Ascending aorta (tissue), 2 donors: ENCODE measurements at regions of chr5 and their contacts with region 1.

Region 1: DNA sequence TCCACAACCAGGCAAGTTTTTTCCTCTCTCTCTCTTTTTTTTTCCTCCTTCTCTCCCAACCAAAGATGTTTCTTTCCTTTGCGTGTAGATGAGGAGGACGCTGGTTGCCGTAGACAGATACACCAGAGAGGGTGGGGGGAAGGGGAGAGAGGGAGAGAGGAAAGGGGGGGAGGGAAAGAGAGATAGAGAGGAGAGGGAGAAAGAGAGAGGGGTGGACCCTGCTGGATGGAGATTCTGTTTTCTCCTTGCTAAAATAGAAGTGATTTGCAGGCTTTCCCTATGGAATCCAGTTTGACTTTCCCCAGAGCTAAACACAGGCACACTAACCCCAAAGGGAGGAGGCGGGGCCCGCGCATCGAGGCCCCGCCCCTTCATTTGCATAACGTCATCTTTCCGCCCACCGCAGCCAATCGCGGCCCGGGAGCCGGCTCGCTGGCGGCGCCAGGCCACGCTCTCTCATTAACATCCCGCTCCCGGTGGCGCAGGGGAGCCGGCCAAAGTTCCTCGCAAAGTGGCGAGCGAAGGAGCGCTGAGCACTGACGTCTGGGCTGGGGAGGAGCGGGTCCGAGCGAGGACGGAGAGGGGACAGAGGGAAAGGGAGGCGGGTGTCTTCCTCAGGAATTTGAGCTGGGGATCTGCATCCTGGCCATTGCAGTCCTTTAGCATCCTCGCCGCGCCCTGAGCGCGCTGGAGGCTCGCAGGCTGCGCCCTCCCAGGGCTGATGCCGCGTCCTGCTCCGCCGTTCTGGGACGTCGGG is 487 bp upstream of the EBF1 start:
- DNase-seq: peak; percentile 67 to 96
- H3K4me3 ChIP-seq: peak overlapping the region; percentile 70 to 77
- H3K27ac ChIP-seq: peak overlapping the region; percentile 94 to 97
- H3K4me1 ChIP-seq: peaks cover 7 to 15% of the 10 kb centered on the region in 2 donors
- H3K27me3 ChIP-seq: no peaks in the 10 kb centered on the region
- CTCF ChIP-seq: peak in 2 of 3 experiments; percentile 6 to 12

Region 2: DNA sequence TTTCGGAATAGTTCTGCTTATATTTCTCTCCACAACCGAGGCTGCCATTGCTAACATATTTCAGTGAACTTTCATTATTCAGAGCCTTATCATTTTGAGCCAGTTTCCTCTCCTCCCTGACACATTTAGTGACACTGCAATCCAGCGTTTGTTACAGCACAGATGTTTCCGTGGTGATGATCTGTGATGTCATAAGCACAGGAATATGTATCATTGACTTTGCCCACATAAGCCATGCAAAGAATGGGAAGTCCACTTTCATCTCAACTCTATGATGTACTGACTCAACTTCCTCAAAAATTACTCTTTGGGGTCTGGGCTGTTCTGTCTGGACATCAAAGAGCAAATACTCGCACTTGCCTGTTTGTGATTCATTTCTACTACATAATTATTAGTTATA is 292.3 kb before region 1 on chr5:
- intact Hi-C with region 1: loop called (anchors 5 kb)
- DNase-seq: no peak
- H3K4me3 ChIP-seq: no peak overlapping the region
- H3K27ac ChIP-seq: peak overlapping the region; percentile 9 to 54
- H3K4me1 ChIP-seq: peaks cover 3 to 27% of the 10 kb centered on the region in 2 donors
- H3K27me3 ChIP-seq: no peaks in the 10 kb centered on the region
- CTCF ChIP-seq: no peak

Region 3: DNA sequence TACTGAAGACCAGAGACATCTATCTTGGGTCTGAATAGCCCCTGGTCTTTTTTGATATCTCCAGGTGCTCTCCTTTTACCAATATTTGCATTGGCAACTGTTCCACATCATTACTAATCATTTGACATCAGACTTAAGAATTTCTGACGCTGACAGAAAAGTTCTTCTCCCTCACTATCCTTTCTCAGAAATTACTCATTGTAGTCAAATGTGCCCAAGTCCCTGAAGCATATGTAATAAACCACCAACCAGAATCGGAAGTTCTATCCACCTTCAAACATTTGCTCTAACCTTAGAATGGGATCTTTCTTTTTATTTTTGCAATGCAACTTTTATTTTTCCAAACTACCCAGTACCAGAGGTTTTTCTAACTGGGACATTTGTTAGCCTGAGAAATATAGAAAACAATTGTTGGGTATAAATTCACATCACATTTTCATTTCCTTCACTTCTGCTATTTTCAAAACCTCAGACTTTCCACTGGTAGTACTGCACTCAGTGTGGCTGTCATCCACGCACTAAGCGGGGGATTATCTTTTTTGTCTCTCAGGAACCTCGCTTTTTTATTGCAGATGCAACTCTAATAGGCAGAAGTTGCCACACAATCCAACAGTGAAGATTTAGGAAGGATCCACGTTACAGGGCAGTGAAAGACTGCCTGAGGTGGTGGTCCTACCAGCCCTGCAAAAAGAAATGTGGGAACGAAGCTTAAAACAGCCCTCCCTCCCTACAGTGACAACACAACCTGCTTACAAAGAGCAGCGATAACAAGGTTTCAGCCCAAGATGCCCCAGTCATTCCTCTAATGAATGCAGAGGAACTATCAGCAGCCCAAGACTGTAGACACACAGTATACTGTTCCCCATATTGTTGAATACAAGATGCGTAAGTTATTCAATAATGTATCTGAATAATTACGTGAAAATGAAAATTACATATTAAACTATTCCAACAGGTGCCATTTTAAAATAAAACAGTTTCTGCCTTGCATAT is 201.7 kb before region 1 on chr5:
- intact Hi-C with region 1: loop called (anchors 5 kb)
- DNase-seq: no peak
- H3K4me3 ChIP-seq: no peak overlapping the region
- H3K27ac ChIP-seq: no peak overlapping the region
- H3K4me1 ChIP-seq: peaks cover 0 to 17% of the 10 kb centered on the region in 2 donors
- H3K27me3 ChIP-seq: no peaks in the 10 kb centered on the region
- CTCF ChIP-seq: no peak

Region 4: DNA sequence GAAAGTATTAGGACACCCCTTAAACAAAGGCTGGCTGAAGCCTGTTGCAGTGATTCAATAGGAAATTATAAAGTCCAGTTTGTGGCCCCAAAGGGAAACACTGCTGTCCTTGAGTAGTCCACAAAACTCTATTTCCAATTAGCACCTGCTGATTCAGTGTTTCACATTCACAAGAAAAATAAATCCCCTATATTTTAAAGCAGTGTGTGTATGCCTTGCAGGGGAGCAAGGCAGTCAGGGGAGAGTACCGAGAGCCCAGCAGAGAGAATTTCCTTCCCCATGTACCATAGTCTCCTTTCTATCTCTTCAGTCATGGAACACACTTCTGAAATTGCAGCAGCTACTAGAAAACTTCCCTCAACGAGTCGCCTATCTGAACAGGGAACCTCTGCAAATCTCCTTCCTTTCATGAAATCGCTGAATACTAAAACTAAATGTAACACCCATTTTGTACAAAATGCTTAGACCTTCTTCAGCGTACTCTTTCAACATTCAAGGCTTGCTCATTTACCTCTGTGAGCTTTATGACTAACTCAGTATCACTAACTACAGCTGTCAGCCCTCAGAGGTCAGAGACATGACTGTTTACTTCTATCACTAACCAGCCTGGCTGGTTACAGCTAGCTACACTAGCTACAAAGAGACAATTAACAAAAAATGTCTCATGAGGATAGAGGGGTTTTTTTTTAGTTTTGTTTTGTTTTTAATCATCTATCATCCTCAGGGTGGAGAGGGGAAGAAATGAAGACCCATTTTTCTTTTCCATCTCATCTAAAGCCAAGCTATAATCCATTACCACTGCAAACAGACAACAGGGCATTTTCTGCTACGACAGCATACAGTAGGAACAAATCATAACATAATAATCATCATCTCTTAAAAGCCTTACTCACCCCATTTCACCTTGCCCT is 189.2 kb before region 1 on chr5:
- intact Hi-C with region 1: no loop called
- DNase-seq: no peak
- H3K4me3 ChIP-seq: no peak overlapping the region
- H3K27ac ChIP-seq: no peak overlapping the region
- H3K4me1 ChIP-seq: peaks cover 0 to 9% of the 10 kb centered on the region in 2 donors
- H3K27me3 ChIP-seq: no peaks in the 10 kb centered on the region
- CTCF ChIP-seq: no peak

Region 5: DNA sequence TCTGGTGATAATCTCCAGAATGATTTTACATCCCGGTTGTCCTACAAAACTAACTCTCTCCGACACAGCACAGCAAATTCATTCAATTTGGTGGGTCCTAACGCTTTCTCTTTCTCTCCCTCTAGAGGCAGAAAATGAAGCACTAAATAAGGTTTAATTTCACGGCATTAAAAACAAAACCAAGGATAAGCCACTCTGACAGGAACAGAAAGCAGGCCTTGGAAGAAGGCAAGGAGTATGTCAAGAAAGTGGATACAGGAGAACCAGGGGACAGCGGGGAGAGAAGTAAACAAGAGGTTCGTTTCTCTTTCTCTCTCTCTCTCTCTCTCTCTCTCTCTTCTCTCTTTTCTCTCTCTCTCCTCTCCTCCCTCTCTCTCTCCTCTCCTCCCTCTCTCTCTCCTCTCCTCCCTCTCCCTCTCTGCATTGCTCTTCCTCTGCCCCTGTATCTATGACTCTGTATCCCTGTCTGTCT is 50.3 kb before region 1 on chr5:
- intact Hi-C with region 1: loop called (anchors 2 kb)
- DNase-seq: no peak
- H3K4me3 ChIP-seq: peak overlapping the region; percentile 43 to 64
- H3K27ac ChIP-seq: peak overlapping the region; percentile 80 to 87
- H3K4me1 ChIP-seq: peaks cover 4 to 52% of the 10 kb centered on the region in 2 donors
- H3K27me3 ChIP-seq: no peaks in the 10 kb centered on the region
- CTCF ChIP-seq: peak; percentile 35 to 63 (median 44)

Region 6: DNA sequence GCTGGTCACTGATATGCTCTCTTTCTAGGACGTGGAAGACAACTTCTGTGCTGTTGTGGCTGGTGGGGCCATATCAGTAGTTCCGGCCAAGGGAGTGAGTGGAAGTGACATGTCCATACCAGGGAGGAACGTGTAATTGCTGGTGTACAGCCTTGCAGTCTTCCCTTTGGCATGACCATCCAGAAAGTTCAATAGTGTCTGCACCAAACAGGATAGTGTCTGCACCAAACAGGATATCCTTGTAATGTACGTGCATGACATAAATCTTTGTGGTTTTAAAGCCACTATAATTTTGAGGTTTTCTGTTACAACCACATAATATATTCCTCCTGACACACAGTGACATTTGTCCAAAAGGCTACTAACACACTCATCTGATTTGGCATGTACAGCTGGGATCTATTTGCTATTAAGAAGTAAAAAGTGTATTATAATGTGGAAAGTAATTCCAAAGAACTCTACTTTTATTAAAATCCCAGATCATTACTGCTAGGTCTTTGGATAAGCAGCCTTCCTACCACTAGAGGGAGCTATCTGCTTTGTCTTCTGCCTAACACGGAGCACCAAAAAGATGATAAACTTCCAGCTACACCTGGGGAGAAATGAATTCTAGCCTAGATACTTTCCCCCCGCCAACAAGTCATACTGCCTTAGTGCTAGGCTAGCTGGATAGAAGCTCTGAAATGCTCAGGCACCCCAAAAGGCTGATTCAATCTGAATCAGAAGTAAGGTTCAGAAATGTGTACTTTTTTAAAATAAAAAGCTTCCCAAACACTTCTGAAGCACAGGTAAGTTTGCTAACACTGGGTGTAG is 56.4 kb after region 1 on chr5:
- intact Hi-C with region 1: no loop called
- DNase-seq: no peak
- H3K4me3 ChIP-seq: no peak overlapping the region
- H3K27ac ChIP-seq: peak overlapping the region in 1 of 2 donors; percentile 4
- H3K4me1 ChIP-seq: peaks cover 0 to 4% of the 10 kb centered on the region in 2 donors
- H3K27me3 ChIP-seq: no peaks in the 10 kb centered on the region
- CTCF ChIP-seq: peak; percentile 75 to 82 (median 78)